A673 (cell line): ENCODE measurements at regions of chr7 and their contacts with region 1.

Region 1: DNA sequence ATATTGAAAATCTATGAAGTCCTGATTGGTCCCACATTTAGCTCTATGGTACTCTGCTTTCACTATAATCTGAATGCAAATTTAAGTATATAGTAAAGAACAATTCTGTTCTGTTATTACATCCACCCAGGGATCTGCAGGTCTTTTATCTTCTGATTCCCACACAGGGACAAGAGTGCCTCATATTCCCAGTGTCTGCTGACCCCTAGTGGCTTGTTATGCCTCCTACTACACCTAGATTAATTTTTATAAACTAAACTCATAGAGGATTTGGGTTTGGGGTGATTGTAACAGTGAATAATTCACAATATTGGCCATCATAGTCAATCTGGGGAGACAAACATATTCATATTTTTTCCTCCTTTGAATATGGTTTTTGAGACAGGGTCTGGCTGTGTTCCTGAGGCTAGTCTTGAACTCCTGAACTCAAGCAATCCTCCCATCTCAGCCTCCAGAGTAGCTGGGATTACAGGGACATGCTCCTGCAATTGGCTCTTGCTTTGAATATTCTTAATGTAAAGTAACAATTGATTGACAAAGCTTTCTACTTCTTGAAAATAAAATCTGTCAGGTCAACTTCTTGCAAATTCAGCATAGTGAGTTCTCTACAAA is 282.1 kb downstream of the KCND2 start:
- DNase-seq: peak; percentile 71
- H3K4me3 ChIP-seq: no peak overlapping the region
- H3K27ac ChIP-seq: no peak overlapping the region
- H3K4me1 ChIP-seq: peaks cover 16% of the 10 kb centered on the region
- H3K27me3 ChIP-seq: no peaks in the 10 kb centered on the region
- CTCF ChIP-seq: peak; percentile 81

Region 2: GRCh38 chr7:119270045-119270464 is 1285.0 kb before region 1 on chr7:
- CTCF ChIA-PET with region 1: no interaction called
- POLR2A ChIA-PET with region 1: no interaction called
- intact Hi-C with region 1: loop called (anchors 5 kb)
- DNase-seq: peak; percentile 78
- H3K4me3 ChIP-seq: no peak overlapping the region
- H3K27ac ChIP-seq: no peak overlapping the region
- H3K4me1 ChIP-seq: no peaks in the 10 kb centered on the region
- H3K27me3 ChIP-seq: no peaks in the 10 kb centered on the region
- CTCF ChIP-seq: peak; percentile 88

Region 3: GRCh38 chr7:119935418-119936025 is 619.5 kb before region 1 on chr7:
- CTCF ChIA-PET with region 1: no interaction called
- POLR2A ChIA-PET with region 1: no interaction called
- intact Hi-C with region 1: loop called (anchors 2 kb)
- DNase-seq: peak; percentile 52
- H3K4me3 ChIP-seq: no peak overlapping the region
- H3K27ac ChIP-seq: no peak overlapping the region
- H3K4me1 ChIP-seq: no peaks in the 10 kb centered on the region
- H3K27me3 ChIP-seq: no peaks in the 10 kb centered on the region
- CTCF ChIP-seq: peak; percentile 65

Region 4: GRCh38 chr7:120583899-120584586 is 29.0 kb after region 1 on chr7:
- CTCF ChIA-PET with region 1: no interaction called
- POLR2A ChIA-PET with region 1: no interaction called
- intact Hi-C with region 1: no loop called
- DNase-seq: peak; percentile 41
- H3K4me3 ChIP-seq: no peak overlapping the region
- H3K27ac ChIP-seq: no peak overlapping the region
- H3K4me1 ChIP-seq: peaks cover 11% of the 10 kb centered on the region
- H3K27me3 ChIP-seq: no peaks in the 10 kb centered on the region
- CTCF ChIP-seq: no peak

Region 5: DNA sequence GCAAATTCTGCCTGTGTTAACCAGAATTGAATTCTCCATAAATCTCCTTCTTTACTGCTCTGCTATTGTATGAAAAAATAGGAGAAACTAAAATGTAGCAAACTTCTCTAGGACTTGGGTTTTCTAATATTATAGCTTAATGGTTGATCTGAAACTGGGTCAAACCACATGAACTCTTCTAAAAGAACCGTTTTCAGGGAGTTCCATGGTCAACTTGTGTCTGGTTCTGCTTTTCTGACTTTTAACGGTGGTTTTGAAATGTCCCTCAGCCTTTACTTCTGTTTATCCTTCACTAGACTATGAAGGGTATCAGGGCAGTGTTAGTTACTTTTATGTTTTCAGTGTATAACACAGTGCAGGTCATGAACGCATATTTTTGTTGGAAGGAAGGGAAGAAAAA is 60.6 kb after region 1 on chr7:
- CTCF ChIA-PET with region 1: no interaction called
- POLR2A ChIA-PET with region 1: no interaction called
- intact Hi-C with region 1: no loop called
- DNase-seq: no peak
- H3K4me3 ChIP-seq: no peak overlapping the region
- H3K27ac ChIP-seq: no peak overlapping the region
- H3K4me1 ChIP-seq: no peaks in the 10 kb centered on the region
- H3K27me3 ChIP-seq: no peaks in the 10 kb centered on the region
- CTCF ChIP-seq: no peak

Region 6: DNA sequence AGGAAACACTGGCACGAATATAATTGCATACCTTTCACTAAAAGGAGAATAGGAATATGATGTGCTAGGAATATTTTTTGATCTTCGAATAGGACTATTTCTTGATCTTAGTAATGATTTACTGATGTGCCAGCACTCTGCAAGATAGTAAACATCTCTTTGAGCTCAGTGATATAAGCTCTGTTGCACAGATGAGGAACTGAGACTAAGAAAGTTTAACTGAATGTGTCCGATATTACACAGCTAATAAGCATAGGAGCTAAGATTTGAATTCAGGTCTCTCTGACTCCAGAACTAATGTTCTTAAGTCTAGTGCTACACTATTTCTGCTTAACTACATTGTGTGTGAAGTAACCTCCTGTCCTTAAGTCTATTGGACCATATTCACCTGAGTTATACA is 1219.5 kb after region 1 on chr7:
- CTCF ChIA-PET with region 1: no interaction called
- POLR2A ChIA-PET with region 1: no interaction called
- intact Hi-C with region 1: no loop called
- DNase-seq: no peak
- H3K4me3 ChIP-seq: no peak overlapping the region
- H3K27ac ChIP-seq: no peak overlapping the region
- H3K4me1 ChIP-seq: no peaks in the 10 kb centered on the region
- H3K27me3 ChIP-seq: no peaks in the 10 kb centered on the region
- CTCF ChIP-seq: no peak